CD4-positive, alpha-beta memory T cell (primary cell): ENCODE measurements at regions of chr7 and their contacts with region 1.

Region 1: GRCh38 chr7:8134089-8134733 is 127.8 kb downstream of the ICA1 start:
- DNase-seq: peak; percentile 38 to 63 (median 48)
- H3K4me3 ChIP-seq: peak overlapping the region in 1 of 2 donors; percentile 15
- H3K4me3 Mint-ChIP-seq: peak overlapping the region; percentile 17 to 85 (median 59)
- H3K27ac ChIP-seq: peak overlapping the region; percentile 57
- H3K27ac Mint-ChIP-seq: peak overlapping the region; percentile 93 to 100 (median 97)
- H3K4me1 ChIP-seq: peaks cover 74% of the 10 kb centered on the region
- H3K4me1 Mint-ChIP-seq: peaks cover 48 to 88% (median 68%) of the 10 kb centered on the region in 4 donors
- H3K27me3 ChIP-seq: no peaks in the 10 kb centered on the region
- H3K27me3 Mint-ChIP-seq: no peaks in the 10 kb centered on the region

Region 2: GRCh38 chr7:7867846-7868571 is 266.2 kb before region 1 on chr7:
- CTCF ChIA-PET with region 1: no interaction called
- POLR2A ChIA-PET with region 1: no interaction called
- intact Hi-C with region 1: no loop called
- DNase-seq: no peak
- H3K4me3 ChIP-seq: no peak overlapping the region
- H3K4me3 Mint-ChIP-seq: no peak overlapping the region
- H3K27ac ChIP-seq: no peak overlapping the region
- H3K27ac Mint-ChIP-seq: no peak overlapping the region
- H3K4me1 ChIP-seq: no peaks in the 10 kb centered on the region
- H3K4me1 Mint-ChIP-seq: no peaks in the 10 kb centered on the region
- H3K27me3 ChIP-seq: no peaks in the 10 kb centered on the region
- H3K27me3 Mint-ChIP-seq: no peaks in the 10 kb centered on the region

Region 3: GRCh38 chr7:8065356-8065813 is 68.8 kb before region 1 on chr7:
- CTCF ChIA-PET with region 1: no interaction called
- POLR2A ChIA-PET with region 1: no interaction called
- intact Hi-C with region 1: no loop called
- DNase-seq: no peak
- H3K4me3 ChIP-seq: no peak overlapping the region
- H3K4me3 Mint-ChIP-seq: no peak overlapping the region
- H3K27ac ChIP-seq: no peak overlapping the region
- H3K27ac Mint-ChIP-seq: peak overlapping the region in 1 of 7 donors; percentile 10
- H3K4me1 ChIP-seq: peaks cover 21% of the 10 kb centered on the region
- H3K4me1 Mint-ChIP-seq: peaks cover 41 to 59% (median 48%) of the 10 kb centered on the region in 4 donors
- H3K27me3 ChIP-seq: no peaks in the 10 kb centered on the region
- H3K27me3 Mint-ChIP-seq: no peaks in the 10 kb centered on the region

Region 4: DNA sequence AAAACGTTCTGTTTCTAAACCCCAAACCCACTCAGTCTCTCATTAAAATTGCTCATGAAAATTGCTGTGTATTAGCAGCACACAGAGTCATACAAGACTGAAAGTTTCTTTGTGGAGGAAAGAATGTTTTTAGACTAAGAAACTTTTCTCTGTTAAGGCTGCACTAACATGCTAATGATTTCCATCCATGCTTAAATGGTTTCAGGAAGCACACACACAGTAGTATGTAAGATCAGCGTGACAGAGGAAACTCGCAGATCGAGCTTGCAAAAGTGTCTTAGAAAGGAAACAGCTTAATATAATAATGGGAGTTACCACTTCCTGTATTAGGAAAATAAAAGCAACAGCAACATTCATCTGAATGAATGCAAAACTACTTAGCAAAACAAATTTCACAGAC is 15.0 kb after region 1 on chr7:
- CTCF ChIA-PET with region 1: interaction called, 9 read pairs
- POLR2A ChIA-PET with region 1: interaction called, 74 read pairs
- intact Hi-C with region 1: loop called (anchors 1 kb)
- DNase-seq: no peak
- H3K4me3 ChIP-seq: no peak overlapping the region
- H3K4me3 Mint-ChIP-seq: peak overlapping the region; percentile 19 to 73 (median 55)
- H3K27ac ChIP-seq: peak overlapping the region; percentile 13
- H3K27ac Mint-ChIP-seq: peak overlapping the region; percentile 58 to 92 (median 84)
- H3K4me1 ChIP-seq: peaks cover 57% of the 10 kb centered on the region
- H3K4me1 Mint-ChIP-seq: peaks cover 45 to 75% (median 62%) of the 10 kb centered on the region in 4 donors
- H3K27me3 ChIP-seq: no peaks in the 10 kb centered on the region
- H3K27me3 Mint-ChIP-seq: no peaks in the 10 kb centered on the region

Region 5: GRCh38 chr7:8938044-8938805 is 804.0 kb after region 1 on chr7:
- CTCF ChIA-PET with region 1: no interaction called
- POLR2A ChIA-PET with region 1: no interaction called
- intact Hi-C with region 1: no loop called
- DNase-seq: no peak
- H3K4me3 ChIP-seq: no peak overlapping the region
- H3K4me3 Mint-ChIP-seq: no peak overlapping the region
- H3K27ac ChIP-seq: no peak overlapping the region
- H3K27ac Mint-ChIP-seq: no peak overlapping the region
- H3K4me1 ChIP-seq: no peaks in the 10 kb centered on the region
- H3K4me1 Mint-ChIP-seq: no peaks in the 10 kb centered on the region
- H3K27me3 ChIP-seq: no peaks in the 10 kb centered on the region
- H3K27me3 Mint-ChIP-seq: no peaks in the 10 kb centered on the region